A673 (cell line): ENCODE measurements at regions of chr12 and their contacts with region 1.

Region 1: DNA sequence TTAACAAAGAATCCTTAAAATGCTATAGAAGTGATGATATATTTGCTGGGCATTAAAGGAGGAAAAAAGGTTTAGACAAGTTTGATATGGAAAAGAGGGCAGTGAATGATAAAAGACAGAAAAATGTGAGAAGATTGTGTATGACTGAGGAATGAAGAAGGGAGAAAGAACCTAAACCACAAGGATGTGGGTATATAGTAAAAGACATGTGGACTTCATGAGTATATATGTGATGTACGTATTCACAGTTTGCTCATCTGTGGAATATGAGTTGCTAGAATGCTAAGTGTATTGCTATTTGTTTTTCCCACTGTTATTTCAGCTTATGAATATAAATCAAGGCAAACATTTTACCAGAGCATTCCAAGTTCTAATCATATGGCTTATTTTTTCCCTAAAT is 2.1 kb upstream of the SLC16A7 start:
- DNase-seq: no peak
- H3K4me3 ChIP-seq: no peak overlapping the region
- H3K27ac ChIP-seq: no peak overlapping the region
- H3K4me1 ChIP-seq: no peaks in the 10 kb centered on the region
- H3K27me3 ChIP-seq: no peaks in the 10 kb centered on the region
- CTCF ChIP-seq: no peak

Region 2: DNA sequence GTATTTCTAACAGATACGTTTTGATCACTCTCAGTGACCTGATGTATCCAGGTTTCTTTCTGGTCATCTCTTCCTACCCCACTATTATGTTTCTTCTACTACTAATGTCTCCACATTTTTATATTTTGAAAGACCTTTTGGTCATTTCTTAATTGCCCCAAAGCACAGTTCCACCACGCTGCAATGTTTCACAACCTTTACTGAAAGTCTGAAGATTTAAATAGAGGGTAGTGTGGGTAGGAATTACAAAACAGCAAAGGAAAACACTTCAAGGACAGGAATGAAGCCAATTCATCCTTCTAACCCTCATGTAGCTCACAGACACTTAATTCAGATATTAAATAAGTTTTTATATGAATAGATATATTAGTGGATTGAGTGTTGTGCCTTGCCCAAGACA is 34.1 kb before region 1 on chr12:
- CTCF ChIA-PET with region 1: no interaction called
- POLR2A ChIA-PET with region 1: no interaction called
- intact Hi-C with region 1: loop called (anchors 1 kb)
- DNase-seq: no peak
- H3K4me3 ChIP-seq: no peak overlapping the region
- H3K27ac ChIP-seq: no peak overlapping the region
- H3K4me1 ChIP-seq: no peaks in the 10 kb centered on the region
- H3K27me3 ChIP-seq: no peaks in the 10 kb centered on the region
- CTCF ChIP-seq: no peak

Region 3: GRCh38 chr12:59626377-59626776 is 32.6 kb after region 1 on chr12:
- CTCF ChIA-PET with region 1: no interaction called
- POLR2A ChIA-PET with region 1: no interaction called
- intact Hi-C with region 1: no loop called
- DNase-seq: no peak
- H3K4me3 ChIP-seq: no peak overlapping the region
- H3K27ac ChIP-seq: no peak overlapping the region
- H3K4me1 ChIP-seq: no peaks in the 10 kb centered on the region
- H3K27me3 ChIP-seq: no peaks in the 10 kb centered on the region
- CTCF ChIP-seq: no peak